ENCODE measurements at regions of chr3 and their contacts with region 1.

Region 1: DNA sequence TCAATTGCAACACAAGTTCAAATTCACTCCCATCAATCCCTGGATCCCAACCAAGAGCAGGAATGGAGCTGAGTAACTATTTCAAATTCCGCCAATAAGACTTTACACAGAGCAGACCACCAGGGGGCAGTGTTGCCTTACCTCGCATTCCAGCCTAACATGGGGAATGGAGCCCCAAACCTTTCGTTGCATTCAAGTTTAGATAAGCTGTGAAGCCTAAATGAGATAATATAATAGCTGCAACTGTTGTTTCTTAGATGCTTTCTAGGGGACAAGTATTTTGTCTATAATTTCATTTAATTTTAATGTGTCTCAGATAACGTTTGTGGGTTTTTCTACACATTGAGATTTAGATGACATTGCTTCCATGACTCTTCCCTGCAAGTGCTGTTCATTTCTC is 186.7 kb downstream of the NSUN3 start:
- DNase-seq: no peak
- H3K4me3 ChIP-seq: no peak overlapping the region
- CTCF ChIP-seq: peak; percentile 79

Region 2: GRCh38 chr3:94115482-94115881 is 134.1 kb before region 1 on chr3:
- CTCF ChIA-PET with region 1: interaction called, 18 read pairs
- POLR2A ChIA-PET with region 1: no interaction called
- DNase-seq: no peak
- H3K4me3 ChIP-seq: no peak overlapping the region
- CTCF ChIP-seq: no peak

Region 3: DNA sequence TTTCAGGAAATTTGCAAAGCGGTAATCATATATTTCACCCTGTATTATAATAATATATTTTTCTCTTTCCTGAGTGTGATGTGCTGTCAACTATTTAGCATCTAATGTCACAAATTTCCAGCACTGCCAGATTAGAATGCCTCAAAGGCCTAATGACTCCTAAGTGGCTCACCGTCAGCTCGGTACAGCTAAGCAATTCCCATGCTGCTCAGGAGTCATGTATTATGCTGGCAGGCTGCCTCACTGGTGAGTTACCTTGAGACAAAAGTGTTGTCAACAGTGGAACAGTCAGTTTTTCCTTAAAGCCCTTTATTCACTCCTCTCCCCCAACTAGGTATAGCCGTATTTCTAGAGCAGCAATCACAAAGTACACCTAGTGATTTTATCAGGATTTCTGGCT is 103.1 kb before region 1 on chr3:
- CTCF ChIA-PET with region 1: no interaction called
- POLR2A ChIA-PET with region 1: no interaction called
- DNase-seq: no peak
- H3K4me3 ChIP-seq: no peak overlapping the region
- CTCF ChIP-seq: no peak

Region 4: DNA sequence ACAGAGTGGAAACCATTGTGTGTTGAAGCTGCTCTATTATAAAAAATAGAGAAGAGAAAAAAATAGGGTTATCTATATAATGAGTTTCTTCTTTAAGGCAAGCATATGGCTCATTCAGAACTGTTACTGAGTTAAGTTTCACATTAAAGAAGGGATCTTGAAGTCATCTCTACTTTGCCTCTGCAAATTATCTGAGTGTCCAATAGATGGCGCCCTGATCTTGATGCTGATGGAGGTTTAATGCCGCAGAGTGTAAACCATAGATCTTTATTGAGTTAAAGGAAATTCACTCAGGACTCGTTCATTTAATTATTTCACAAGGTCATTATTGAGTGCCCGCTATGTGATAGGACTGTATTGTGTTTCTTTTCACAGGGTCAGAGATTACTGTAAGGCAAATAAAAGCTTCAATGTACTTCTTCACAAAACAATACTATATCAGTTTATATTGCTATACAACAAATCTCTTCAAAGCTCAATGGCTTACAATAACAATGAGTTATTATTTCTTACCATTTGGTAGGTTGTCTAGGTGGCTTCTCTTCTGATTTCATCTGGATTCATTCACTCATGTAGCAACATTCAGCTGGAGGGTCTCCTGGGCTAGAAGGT is 15.3 kb before region 1 on chr3:
- CTCF ChIA-PET with region 1: interaction called, 21 read pairs
- POLR2A ChIA-PET with region 1: no interaction called
- DNase-seq: peak; percentile 5
- H3K4me3 ChIP-seq: no peak overlapping the region
- CTCF ChIP-seq: peak; percentile 69

Region 5: DNA sequence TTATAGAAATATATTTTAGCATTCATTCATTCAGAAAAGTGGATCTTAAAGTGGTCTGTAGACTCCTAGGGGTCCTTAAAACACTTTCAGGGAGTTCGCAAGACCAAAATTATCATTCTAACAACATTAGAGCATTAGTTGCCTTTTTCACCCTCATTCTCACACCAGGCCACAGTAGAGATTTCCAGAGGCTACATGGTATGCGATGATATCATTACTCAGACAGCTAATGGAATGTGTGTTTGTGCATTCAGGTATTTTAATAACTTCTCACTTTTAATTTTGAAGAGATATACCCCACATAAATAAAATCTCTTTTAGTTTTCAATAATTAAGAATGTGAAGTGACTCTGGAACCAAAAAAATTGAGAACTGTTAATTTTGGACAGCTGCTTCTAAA is 20.2 kb after region 1 on chr3:
- CTCF ChIA-PET with region 1: interaction called, 26 read pairs
- POLR2A ChIA-PET with region 1: no interaction called
- DNase-seq: no peak
- H3K4me3 ChIP-seq: no peak overlapping the region
- CTCF ChIP-seq: no peak

Region 6: DNA sequence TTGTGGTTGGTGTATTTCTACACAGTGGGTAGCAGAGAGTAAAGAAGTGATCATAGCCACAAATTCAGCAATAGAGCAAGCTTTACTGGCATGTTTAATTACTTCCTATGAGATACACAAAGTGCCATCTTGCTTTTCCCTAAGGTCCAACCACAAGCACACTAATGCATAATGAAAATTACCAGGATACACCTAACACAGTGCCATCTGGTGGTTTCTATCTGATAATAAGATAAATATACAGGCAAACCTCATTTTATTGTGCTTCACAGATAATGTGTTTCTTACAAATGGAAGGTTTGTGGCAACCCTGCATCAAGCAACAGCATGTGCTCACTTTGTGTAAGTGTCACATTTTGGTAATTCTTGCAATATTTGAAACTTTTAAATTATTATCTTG is 36.3 kb after region 1 on chr3:
- CTCF ChIA-PET with region 1: interaction called, 51 read pairs
- POLR2A ChIA-PET with region 1: no interaction called
- DNase-seq: no peak
- H3K4me3 ChIP-seq: no peak overlapping the region
- CTCF ChIP-seq: peak; percentile 12

Region 7: GRCh38 chr3:94349310-94349878 is 99.8 kb after region 1 on chr3:
- CTCF ChIA-PET with region 1: no interaction called
- POLR2A ChIA-PET with region 1: no interaction called
- DNase-seq: no peak
- H3K4me3 ChIP-seq: no peak overlapping the region
- CTCF ChIP-seq: no peak

Measured in AG04449 (cell line).